Posterior vena cava (tissue), 2 donors: ENCODE measurements at regions of chr15 and their contacts with region 1.

Region 1: DNA sequence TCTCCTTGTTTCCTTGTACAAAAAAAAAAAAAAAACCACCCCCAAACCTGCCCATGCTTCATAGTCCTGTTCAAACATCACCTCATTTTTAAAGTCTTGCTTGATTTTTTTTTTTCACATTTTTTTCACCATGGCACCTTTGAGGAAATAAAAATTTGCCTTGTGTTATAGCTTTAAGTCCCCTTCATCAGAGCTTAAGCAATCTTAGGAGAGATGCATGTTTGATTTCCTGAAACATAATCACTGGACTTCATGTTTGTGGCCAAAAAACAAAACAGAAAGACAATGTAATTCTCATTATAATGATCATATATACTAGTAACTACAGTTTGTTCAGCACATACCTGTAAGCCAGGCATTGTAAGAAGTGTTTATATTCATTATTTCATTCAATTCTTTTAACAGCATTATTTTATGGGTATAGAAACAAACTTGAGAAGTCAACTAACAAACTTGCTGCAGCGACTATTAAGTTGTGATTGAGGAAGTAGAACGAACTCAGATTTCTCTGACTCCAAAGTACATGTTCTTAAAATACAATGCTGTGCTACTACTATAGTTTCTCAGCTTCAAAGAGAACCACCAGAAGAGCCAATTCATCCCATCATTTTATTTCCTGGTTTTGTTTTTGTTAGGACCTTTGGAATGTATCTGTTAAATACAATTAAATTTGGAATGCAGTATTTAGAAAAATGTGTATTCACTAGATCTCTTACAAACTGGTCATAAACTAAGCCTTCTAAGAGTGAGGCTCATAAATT is 203.8 kb downstream of the TCF12 start:
- DNase-seq: no peak

Region 2: GRCh38 chr15:55588070-55588814 is 1534.0 kb before region 1 on chr15 and contains the start of gene PYGO1:
- intact Hi-C with region 1: loop called in 1 of 2 experiments (anchors 5 kb)
- DNase-seq: peak; percentile 84
- total RNA-seq, gene PYGO1: 12.5 to 15.4 TPM